ENCODE measurements at regions of chr16 and their contacts with region 1.

Region 1: GRCh38 chr16:12896562-12896961 is 4.8 kb upstream of the SHISA9 start:
- DNase-seq: peak in 1 of 2 experiments; percentile 43
- H3K4me3 ChIP-seq: no peak overlapping the region
- H3K4me3 Mint-ChIP-seq: no peak overlapping the region
- H3K27ac Mint-ChIP-seq: no peak overlapping the region
- H3K4me1 ChIP-seq: no peaks in the 10 kb centered on the region
- H3K4me1 Mint-ChIP-seq: no peaks in the 10 kb centered on the region
- H3K27me3 ChIP-seq: no peaks in the 10 kb centered on the region; the same call in 1 of the 2 replicates
- H3K27me3 Mint-ChIP-seq: peaks cover 4% of the 10 kb centered on the region
- CTCF ChIP-seq: peak; percentile 47 to 59

Region 2: DNA sequence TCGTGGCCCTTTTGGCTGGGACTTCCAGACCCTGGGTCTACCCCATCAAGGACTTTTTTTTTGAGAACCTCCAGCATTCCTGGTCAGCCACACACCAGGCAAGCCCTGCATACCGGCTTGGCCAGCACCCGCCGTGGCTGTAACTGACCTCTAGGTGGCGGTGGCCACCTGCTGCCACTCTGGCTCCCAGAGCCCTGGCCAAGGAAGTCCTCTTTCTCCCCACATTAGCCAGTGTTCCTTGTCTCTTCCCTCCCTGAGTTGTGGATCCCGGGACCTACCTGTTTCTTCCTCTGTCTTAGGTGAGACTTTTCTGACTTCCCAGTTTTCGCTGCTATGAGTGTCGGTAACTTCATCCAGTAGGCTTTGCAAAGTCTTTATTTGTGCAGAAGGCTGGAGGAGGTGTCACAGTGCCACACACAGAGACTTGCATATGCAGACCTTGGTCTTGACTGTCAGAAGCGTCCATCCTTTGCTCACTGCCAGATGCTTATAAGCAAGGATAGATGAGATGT is 441.2 kb before region 1 on chr16:
- CTCF ChIA-PET with region 1: no interaction called
- POLR2A ChIA-PET with region 1: no interaction called
- intact Hi-C with region 1: loop called (anchors 5 kb)
- DNase-seq: peak; percentile 57 to 73
- H3K4me3 ChIP-seq: no peak overlapping the region
- H3K4me3 Mint-ChIP-seq: no peak overlapping the region
- H3K27ac Mint-ChIP-seq: no peak overlapping the region
- H3K4me1 ChIP-seq: no peaks in the 10 kb centered on the region
- H3K4me1 Mint-ChIP-seq: no peaks in the 10 kb centered on the region
- H3K27me3 ChIP-seq: no peaks in the 10 kb centered on the region
- H3K27me3 Mint-ChIP-seq: peaks cover 2% of the 10 kb centered on the region
- CTCF ChIP-seq: peak; percentile 84 to 87

Region 3: DNA sequence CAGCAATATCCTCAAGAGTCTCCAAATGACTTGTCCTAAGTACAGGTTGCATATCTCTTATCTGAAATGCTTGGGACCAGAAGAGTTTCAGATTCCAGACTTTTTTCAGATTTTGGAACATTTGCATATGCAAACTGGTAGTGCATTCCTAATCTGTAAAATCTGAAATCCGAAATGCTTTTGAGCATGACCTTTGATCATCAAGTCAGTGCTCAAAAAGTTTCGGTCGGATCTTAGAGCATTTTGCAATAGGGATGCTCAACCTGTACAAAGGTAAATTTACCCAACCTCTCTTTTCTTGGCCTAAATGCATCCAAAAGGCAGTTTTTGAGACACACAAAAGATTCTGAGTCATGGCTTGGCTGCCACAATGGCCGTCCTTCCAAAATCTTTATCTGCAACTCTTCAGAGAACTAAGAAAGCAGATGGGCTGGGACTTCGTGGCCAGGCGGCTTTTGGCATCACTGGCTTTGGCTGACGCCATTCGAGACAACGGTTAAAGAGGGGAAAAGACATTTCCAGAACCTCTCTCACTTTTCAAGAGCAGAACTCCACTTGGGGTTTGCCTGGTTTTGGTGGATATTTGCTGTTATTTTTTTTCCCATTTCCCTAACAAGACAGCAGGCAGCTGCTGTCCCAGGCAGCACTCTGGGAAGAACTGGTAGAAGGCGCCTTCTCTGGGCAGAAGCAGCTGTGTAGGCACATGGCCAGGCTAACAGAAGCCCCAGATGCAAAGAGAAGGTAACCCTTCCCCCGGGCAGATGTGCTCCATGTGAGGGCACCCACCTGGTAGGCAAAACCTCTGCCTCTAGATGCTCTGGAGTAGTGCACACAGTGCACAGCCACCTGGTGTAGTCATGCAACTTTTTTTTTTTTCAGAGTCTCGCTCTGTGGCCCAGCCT is 101.8 kb before region 1 on chr16:
- CTCF ChIA-PET with region 1: no interaction called
- POLR2A ChIA-PET with region 1: no interaction called
- intact Hi-C with region 1: no loop called
- DNase-seq: peak in 1 of 2 experiments; percentile 48
- H3K4me3 ChIP-seq: no peak overlapping the region
- H3K4me3 Mint-ChIP-seq: no peak overlapping the region
- H3K27ac Mint-ChIP-seq: peak overlapping the region; percentile 22
- H3K4me1 ChIP-seq: peaks cover 17% of the 10 kb centered on the region
- H3K4me1 Mint-ChIP-seq: peaks cover 7% of the 10 kb centered on the region
- H3K27me3 ChIP-seq: no peaks in the 10 kb centered on the region
- H3K27me3 Mint-ChIP-seq: no peaks in the 10 kb centered on the region
- CTCF ChIP-seq: no peak

Region 4: DNA sequence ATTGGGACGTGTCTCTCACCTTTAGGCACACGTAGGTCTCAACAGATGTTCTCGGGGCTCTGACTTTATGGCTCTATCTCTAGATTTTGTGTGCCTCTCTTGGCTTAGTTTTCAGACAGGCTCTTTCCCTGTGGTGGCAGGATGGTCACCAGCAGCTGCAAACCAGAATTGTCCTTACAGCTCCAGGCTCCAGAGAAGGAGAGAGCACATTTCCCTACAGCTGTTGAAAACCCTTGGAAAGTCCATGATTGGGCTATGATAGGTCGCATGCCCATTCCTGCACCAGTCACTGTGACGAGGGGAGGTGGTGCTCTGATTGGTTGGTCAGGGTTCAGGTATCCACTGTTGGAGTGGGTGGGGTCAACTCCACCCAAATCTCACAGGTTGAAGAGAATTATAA is 46.3 kb after region 1 on chr16:
- CTCF ChIA-PET with region 1: no interaction called
- POLR2A ChIA-PET with region 1: no interaction called
- intact Hi-C with region 1: no loop called
- DNase-seq: no peak
- H3K4me3 ChIP-seq: no peak overlapping the region
- H3K4me3 Mint-ChIP-seq: no peak overlapping the region
- H3K27ac Mint-ChIP-seq: no peak overlapping the region
- H3K4me1 ChIP-seq: no peaks in the 10 kb centered on the region
- H3K4me1 Mint-ChIP-seq: no peaks in the 10 kb centered on the region
- H3K27me3 ChIP-seq: no peaks in the 10 kb centered on the region
- H3K27me3 Mint-ChIP-seq: peaks cover 25% of the 10 kb centered on the region
- CTCF ChIP-seq: no peak

Region 5: GRCh38 chr16:13359835-13360234 is 463.3 kb after region 1 on chr16:
- CTCF ChIA-PET with region 1: no interaction called
- POLR2A ChIA-PET with region 1: no interaction called
- intact Hi-C with region 1: loop called (anchors 10 kb)
- DNase-seq: no peak
- H3K4me3 ChIP-seq: no peak overlapping the region
- H3K4me3 Mint-ChIP-seq: no peak overlapping the region
- H3K27ac Mint-ChIP-seq: no peak overlapping the region
- H3K4me1 ChIP-seq: no peaks in the 10 kb centered on the region
- H3K4me1 Mint-ChIP-seq: no peaks in the 10 kb centered on the region
- H3K27me3 ChIP-seq: no peaks in the 10 kb centered on the region; the same call in 1 of the 2 replicates
- H3K27me3 Mint-ChIP-seq: peaks cover 15% of the 10 kb centered on the region
- CTCF ChIP-seq: no peak

Region 6: GRCh38 chr16:13453938-13454553 is 557.5 kb after region 1 on chr16:
- CTCF ChIA-PET with region 1: no interaction called
- POLR2A ChIA-PET with region 1: no interaction called
- intact Hi-C with region 1: loop called (anchors 1 kb)
- DNase-seq: peak in 1 of 2 experiments; percentile 41
- H3K4me3 ChIP-seq: no peak overlapping the region
- H3K4me3 Mint-ChIP-seq: no peak overlapping the region
- H3K27ac Mint-ChIP-seq: no peak overlapping the region
- H3K4me1 ChIP-seq: no peaks in the 10 kb centered on the region
- H3K4me1 Mint-ChIP-seq: no peaks in the 10 kb centered on the region
- H3K27me3 ChIP-seq: no peaks in the 10 kb centered on the region
- H3K27me3 Mint-ChIP-seq: peaks cover 9% of the 10 kb centered on the region
- CTCF ChIP-seq: peak; percentile 53 to 61

Region 7: GRCh38 chr16:13767215-13767614 is 870.7 kb after region 1 on chr16:
- CTCF ChIA-PET with region 1: interaction called, 4 read pairs
- POLR2A ChIA-PET with region 1: no interaction called
- intact Hi-C with region 1: loop called (anchors 5 kb)
- DNase-seq: peak in 1 of 2 experiments; percentile 3
- H3K4me3 ChIP-seq: no peak overlapping the region
- H3K4me3 Mint-ChIP-seq: no peak overlapping the region
- H3K27ac Mint-ChIP-seq: no peak overlapping the region
- H3K4me1 ChIP-seq: no peaks in the 10 kb centered on the region
- H3K4me1 Mint-ChIP-seq: no peaks in the 10 kb centered on the region
- H3K27me3 ChIP-seq: no peaks in the 10 kb centered on the region
- H3K27me3 Mint-ChIP-seq: peaks cover 7% of the 10 kb centered on the region
- CTCF ChIP-seq: peak in 1 of 2 experiments; percentile 38

Measured in Caco-2 (cell line).